Caco-2 (cell line): ENCODE measurements at regions of chr9 and their contacts with region 1.

Region 1: GRCh38 chr9:71984403-71984802 is 73.0 kb downstream of the C9orf85 start:
- DNase-seq: peak in 1 of 2 experiments; percentile 22
- H3K4me3 ChIP-seq: no peak overlapping the region
- H3K4me3 Mint-ChIP-seq: no peak overlapping the region
- H3K27ac Mint-ChIP-seq: no peak overlapping the region
- H3K4me1 ChIP-seq: no peaks in the 10 kb centered on the region
- H3K4me1 Mint-ChIP-seq: peaks cover 8% of the 10 kb centered on the region
- H3K27me3 ChIP-seq: no peaks in the 10 kb centered on the region
- H3K27me3 Mint-ChIP-seq: no peaks in the 10 kb centered on the region
- CTCF ChIP-seq: no peak

Region 2: GRCh38 chr9:71806901-71807307 is 177.5 kb before region 1 on chr9:
- CTCF ChIA-PET with region 1: no interaction called
- POLR2A ChIA-PET with region 1: no interaction called
- intact Hi-C with region 1: loop called (anchors 10 kb)
- DNase-seq: peak; percentile 44 to 51
- H3K4me3 ChIP-seq: no peak overlapping the region
- H3K4me3 Mint-ChIP-seq: no peak overlapping the region
- H3K27ac Mint-ChIP-seq: no peak overlapping the region
- H3K4me1 ChIP-seq: no peaks in the 10 kb centered on the region
- H3K4me1 Mint-ChIP-seq: no peaks in the 10 kb centered on the region
- H3K27me3 ChIP-seq: no peaks in the 10 kb centered on the region
- H3K27me3 Mint-ChIP-seq: no peaks in the 10 kb centered on the region
- CTCF ChIP-seq: peak; percentile 31 to 33

Region 3: DNA sequence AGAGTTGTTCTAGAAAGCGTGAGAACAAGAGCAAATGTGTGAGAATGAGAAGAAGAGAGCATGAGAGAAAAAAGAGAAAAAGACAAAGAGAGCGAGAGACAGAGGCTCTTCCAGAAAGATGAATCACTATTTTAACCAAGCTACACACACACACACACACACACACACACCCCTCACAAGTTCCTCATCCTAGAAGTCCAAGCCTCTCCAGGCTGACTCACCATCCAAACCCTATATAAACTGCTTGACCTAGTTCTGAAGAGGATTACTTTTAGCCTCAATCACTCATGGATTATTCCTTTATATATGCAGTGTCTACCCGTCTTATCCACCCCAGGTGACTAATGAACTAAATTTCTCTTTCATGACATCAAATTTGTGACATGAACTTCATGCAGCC is 38.4 kb after region 1 on chr9:
- CTCF ChIA-PET with region 1: interaction called, 12 read pairs
- POLR2A ChIA-PET with region 1: no interaction called
- intact Hi-C with region 1: loop called (anchors 2 kb)
- DNase-seq: no peak
- H3K4me3 ChIP-seq: no peak overlapping the region
- H3K4me3 Mint-ChIP-seq: no peak overlapping the region
- H3K27ac Mint-ChIP-seq: no peak overlapping the region
- H3K4me1 ChIP-seq: no peaks in the 10 kb centered on the region
- H3K4me1 Mint-ChIP-seq: no peaks in the 10 kb centered on the region
- H3K27me3 ChIP-seq: no peaks in the 10 kb centered on the region
- H3K27me3 Mint-ChIP-seq: no peaks in the 10 kb centered on the region
- CTCF ChIP-seq: no peak

Region 4: DNA sequence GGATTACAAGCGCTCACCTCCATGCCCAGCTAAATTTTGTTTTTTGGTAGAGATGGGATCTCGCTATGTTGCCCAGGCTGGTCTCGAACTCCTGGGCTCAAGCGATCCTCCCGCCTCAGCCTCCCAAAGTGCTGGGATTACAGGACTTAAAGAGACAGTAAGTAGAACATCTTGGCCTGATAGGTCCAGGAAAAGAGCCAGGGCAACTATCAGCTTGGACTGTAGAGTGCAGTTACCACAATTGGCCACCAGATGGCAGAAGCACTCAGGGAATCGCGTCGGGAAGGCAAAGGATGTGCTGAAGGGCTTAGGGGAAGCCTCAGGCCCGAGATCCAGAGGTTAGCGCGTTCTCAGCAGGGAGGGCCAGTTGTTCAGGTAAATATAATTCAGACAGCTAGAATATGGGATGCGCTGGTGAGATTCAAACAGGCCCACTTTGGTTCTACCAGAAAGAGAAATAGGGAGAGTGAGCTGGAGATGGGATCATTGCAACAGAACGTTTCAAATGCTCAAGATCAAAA is 54.5 kb after region 1 on chr9:
- CTCF ChIA-PET with region 1: no interaction called
- POLR2A ChIA-PET with region 1: no interaction called
- intact Hi-C with region 1: no loop called
- DNase-seq: peak; percentile 45 to 57
- H3K4me3 ChIP-seq: no peak overlapping the region
- H3K4me3 Mint-ChIP-seq: no peak overlapping the region
- H3K27ac Mint-ChIP-seq: no peak overlapping the region
- H3K4me1 ChIP-seq: no peaks in the 10 kb centered on the region
- H3K4me1 Mint-ChIP-seq: no peaks in the 10 kb centered on the region
- H3K27me3 ChIP-seq: no peaks in the 10 kb centered on the region
- H3K27me3 Mint-ChIP-seq: no peaks in the 10 kb centered on the region
- CTCF ChIP-seq: peak; percentile 47 to 51

Region 5: GRCh38 chr9:72280913-72281500 is 296.6 kb after region 1 on chr9:
- CTCF ChIA-PET with region 1: no interaction called
- POLR2A ChIA-PET with region 1: no interaction called
- intact Hi-C with region 1: no loop called
- DNase-seq: peak; percentile 29 to 38
- H3K4me3 ChIP-seq: no peak overlapping the region
- H3K4me3 Mint-ChIP-seq: no peak overlapping the region
- H3K27ac Mint-ChIP-seq: no peak overlapping the region
- H3K4me1 ChIP-seq: no peaks in the 10 kb centered on the region
- H3K4me1 Mint-ChIP-seq: no peaks in the 10 kb centered on the region
- H3K27me3 ChIP-seq: no peaks in the 10 kb centered on the region
- H3K27me3 Mint-ChIP-seq: no peaks in the 10 kb centered on the region
- CTCF ChIP-seq: peak; percentile 38 to 55